ENCODE measurements at regions of chr2 and their contacts with region 1.

Region 1: DNA sequence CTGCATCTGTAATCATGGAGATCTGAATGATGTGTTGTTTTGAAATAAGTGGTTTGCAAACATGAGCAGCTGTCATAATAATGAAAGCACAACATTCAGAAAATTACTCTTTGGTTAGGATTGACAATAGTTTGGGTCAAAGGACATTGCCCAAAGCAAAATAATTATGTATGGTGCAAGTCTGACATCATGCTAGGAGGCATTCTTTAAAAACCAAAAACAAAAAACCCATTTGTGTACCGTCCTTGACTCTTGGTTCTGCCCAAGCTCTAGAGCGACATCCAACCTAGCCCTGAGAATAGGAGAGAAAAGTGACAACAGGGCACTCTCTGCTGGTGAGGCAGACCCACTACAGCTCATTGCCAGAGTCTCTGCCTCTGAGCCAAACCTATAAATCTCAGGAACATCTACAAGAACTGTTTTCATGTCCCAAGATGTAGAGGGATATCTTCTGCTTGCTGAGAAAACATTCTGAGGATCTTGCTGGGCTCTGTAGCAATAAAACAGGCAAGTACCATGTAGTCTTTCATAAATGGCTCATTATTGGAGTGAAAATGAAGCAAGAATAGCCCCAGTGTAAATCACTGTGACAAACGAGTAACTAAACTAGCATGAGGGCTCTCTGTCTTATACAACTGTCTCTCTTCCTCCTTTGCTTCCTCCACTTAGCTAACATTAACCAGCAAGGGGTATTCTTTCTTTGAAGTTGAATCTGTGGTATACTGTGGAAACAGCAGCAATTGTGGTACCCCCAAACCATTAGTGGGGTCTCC is 266.8 kb upstream of the CXCR4 start:
- DNase-seq: peak; percentile 68
- ATAC-seq: peak; percentile 40
- H3K4me3 Mint-ChIP-seq: no peak overlapping the region
- H3K27ac Mint-ChIP-seq: peak overlapping the region; percentile 67
- H3K4me1 Mint-ChIP-seq: peaks cover 42% of the 10 kb centered on the region
- H3K27me3 Mint-ChIP-seq: no peaks in the 10 kb centered on the region

Region 2: DNA sequence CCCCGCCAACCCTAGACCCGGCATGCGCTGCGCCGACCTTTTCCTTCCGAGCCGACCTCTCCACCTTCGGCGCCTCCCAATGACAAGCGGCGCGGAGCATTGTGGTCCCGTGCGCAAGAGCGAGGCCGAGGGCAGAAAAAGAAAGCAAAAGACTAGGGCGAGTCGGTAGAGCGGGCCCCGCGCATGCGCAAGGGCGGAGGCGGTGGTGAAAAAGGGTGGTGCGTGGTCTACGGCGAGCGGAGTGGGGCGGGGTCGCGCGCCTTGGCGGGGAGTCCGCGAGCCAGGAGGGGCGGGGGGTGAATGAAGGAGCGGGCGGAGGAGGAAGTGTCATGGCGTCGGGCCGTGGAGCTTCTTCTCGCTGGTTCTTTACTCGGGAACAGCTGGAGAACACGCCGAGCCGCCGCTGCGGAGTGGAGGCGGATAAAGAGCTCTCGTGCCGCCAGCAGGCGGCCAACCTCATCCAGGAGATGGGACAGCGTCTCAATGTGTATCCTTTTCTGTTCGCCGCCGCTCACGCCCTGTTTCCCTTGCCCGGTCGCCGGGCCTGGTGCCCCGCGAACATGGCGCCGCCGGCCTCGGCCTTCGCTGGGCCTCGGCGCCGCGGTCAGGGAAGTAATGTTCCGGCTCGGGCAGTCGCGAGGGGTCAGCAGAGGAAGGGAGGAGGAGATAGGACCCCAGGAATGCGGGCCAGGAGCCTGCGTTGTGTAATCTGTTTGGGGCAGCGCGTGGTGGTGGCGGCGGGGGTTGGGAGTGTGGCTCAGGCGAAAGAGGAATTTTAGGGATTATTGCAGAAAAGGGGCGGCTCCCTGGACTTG is 1466.0 kb before region 1 on chr2 and contains the start of gene CCNT2:
- CTCF ChIA-PET with region 1: no interaction called
- POLR2A ChIA-PET with region 1: no interaction called
- intact Hi-C with region 1: loop called in 1 of 2 experiments (anchors 5 kb)
- DNase-seq: peak; percentile 100
- ATAC-seq: peak; percentile 89
- H3K4me3 Mint-ChIP-seq: peak within 1 kb of the TSS; percentile 92
- H3K27ac Mint-ChIP-seq: peak within 1 kb of the TSS; percentile 98
- H3K4me1 Mint-ChIP-seq: peaks cover 27% of the 10 kb centered on the region
- H3K27me3 Mint-ChIP-seq: no peaks in the 10 kb centered on the region
- total RNA-seq, gene CCNT2: 29.3 to 36.6 TPM

Region 3: DNA sequence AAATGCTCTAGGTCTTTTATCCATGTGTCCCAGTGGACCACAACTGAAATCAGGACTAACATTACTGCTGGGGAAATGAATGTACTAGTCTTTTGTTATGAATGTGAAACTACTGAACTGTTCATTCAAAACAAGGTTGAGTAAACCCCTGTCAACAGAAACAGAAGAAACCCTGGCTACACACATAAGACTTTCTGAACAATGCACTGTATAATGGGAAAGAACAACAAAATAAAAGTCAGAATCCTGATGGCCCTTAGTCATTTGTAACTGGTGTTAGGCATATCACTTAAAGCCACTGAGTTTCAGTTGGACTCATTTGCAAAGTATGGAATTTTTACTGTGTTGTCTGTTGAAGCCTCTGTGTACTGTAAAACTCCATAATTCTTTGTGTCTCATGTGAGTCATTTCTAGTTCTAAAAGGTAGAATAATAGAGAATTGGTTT is 720.1 kb before region 1 on chr2:
- CTCF ChIA-PET with region 1: no interaction called
- POLR2A ChIA-PET with region 1: no interaction called
- intact Hi-C with region 1: loop called in 1 of 2 experiments (anchors 2 kb)
- DNase-seq: no peak
- ATAC-seq: peak; percentile 79
- H3K4me3 Mint-ChIP-seq: no peak overlapping the region
- H3K27ac Mint-ChIP-seq: peak overlapping the region; percentile 1
- H3K4me1 Mint-ChIP-seq: peaks cover 30% of the 10 kb centered on the region
- H3K27me3 Mint-ChIP-seq: no peaks in the 10 kb centered on the region

Region 4: DNA sequence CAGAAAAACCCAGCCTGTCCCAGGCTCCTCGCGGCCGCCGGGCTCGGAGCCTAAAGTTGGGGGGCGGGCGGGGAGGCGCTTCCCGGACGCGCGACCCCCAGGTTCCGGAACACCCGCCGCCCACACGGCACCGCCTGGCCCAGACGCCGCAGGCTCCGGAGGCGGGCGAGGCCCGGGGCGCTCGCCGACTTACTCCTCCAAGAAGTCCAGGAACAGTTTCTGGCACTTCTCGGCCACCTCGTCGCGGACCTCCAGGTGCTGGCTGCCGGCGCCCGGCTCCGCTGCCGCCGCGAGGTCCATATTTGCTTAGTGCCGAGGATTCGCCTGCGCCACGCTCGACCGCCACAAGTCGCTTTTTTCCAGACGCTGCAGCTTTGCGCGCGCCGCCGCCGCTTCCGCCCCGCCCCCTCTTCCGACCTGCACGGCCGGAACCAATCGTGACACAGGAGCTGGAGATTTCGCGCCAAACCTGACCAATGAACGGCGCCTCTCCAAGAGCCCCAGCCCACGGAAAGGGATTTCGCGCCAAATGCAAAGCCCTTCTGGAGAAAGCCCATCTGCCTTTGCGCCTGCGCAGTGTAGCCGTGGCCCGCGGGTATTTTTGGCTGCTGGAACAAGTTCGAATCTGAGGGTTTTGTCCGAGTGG is 508.5 kb before region 1 on chr2 and contains the start of gene MCM6:
- CTCF ChIA-PET with region 1: interaction called, 6 read pairs
- POLR2A ChIA-PET with region 1: interaction called, 11 read pairs
- intact Hi-C with region 1: loop called (anchors 1 kb)
- DNase-seq: peak; percentile 100
- ATAC-seq: peak; percentile 88
- H3K4me3 Mint-ChIP-seq: peak within 1 kb of the TSS; percentile 86
- H3K27ac Mint-ChIP-seq: peak within 1 kb of the TSS; percentile 96
- H3K4me1 Mint-ChIP-seq: peaks cover 44% of the 10 kb centered on the region
- H3K27me3 Mint-ChIP-seq: no peaks in the 10 kb centered on the region
- total RNA-seq, gene MCM6: 228 to 276 TPM

Region 5: GRCh38 chr2:136052369-136053362 is 332.1 kb before region 1 on chr2:
- CTCF ChIA-PET with region 1: interaction called, 13 read pairs
- POLR2A ChIA-PET with region 1: interaction called, 17 read pairs
- intact Hi-C with region 1: loop called (anchors 1 to 2 kb)
- DNase-seq: peak; percentile 20
- ATAC-seq: peak; percentile 21
- H3K4me3 Mint-ChIP-seq: no peak overlapping the region
- H3K27ac Mint-ChIP-seq: peak overlapping the region; percentile 91
- H3K4me1 Mint-ChIP-seq: peaks cover 79% of the 10 kb centered on the region
- H3K27me3 Mint-ChIP-seq: no peaks in the 10 kb centered on the region

Region 6: GRCh38 chr2:136207030-136207623 is 177.6 kb before region 1 on chr2:
- CTCF ChIA-PET with region 1: interaction called, 3 read pairs
- POLR2A ChIA-PET with region 1: interaction called, 7 read pairs
- intact Hi-C with region 1: loop called (anchors 2 kb)
- DNase-seq: peak; percentile 50
- ATAC-seq: peak; percentile 75
- H3K4me3 Mint-ChIP-seq: peak overlapping the region; percentile 26
- H3K27ac Mint-ChIP-seq: peak overlapping the region; percentile 88
- H3K4me1 Mint-ChIP-seq: peaks cover 40% of the 10 kb centered on the region
- H3K27me3 Mint-ChIP-seq: peaks cover 2% of the 10 kb centered on the region

Region 7: GRCh38 chr2:136281281-136282114 is 103.2 kb before region 1 on chr2:
- CTCF ChIA-PET with region 1: no interaction called
- POLR2A ChIA-PET with region 1: no interaction called
- intact Hi-C with region 1: no loop called
- DNase-seq: peak; percentile 45
- ATAC-seq: peak; percentile 72
- H3K4me3 Mint-ChIP-seq: no peak overlapping the region
- H3K27ac Mint-ChIP-seq: peak overlapping the region; percentile 67
- H3K4me1 Mint-ChIP-seq: peaks cover 39% of the 10 kb centered on the region
- H3K27me3 Mint-ChIP-seq: no peaks in the 10 kb centered on the region

Region 8: DNA sequence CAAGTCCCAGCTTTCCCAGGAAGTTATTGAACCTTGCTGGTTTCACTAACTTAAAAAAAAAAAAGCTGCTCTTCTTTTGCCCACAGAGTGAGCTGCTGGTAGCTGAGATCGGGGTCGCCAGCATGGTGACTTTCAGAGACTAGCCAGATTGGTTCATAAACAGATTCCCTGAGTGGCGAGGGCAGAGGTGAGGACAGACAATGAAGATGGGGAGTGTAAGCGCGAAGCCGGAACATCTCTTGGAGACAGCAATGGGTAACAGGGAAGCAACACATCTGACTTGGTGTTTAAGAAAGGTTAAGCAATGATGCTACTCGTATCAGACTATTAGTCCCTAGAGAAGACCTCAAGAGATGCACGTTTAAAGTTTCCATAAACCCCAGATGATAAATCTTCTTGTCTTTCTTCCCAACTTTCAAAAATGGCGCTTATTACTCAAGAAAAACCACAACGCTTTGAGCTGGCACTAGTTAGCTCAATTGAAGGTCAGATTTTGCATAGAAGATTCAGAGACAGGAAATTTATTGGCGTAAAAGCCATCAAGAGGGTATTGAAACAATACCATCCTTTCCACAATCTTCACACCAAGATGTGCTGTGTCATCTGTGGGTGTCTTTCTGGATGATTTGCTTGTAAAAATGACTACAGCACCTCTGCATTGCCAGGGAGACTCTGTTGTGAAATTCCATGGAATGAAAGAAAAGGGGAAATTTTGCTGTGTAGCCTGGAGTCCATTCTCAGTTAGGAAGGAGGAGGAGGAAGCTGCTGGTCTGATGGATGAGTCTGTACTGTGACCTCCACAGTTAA is 73.7 kb before region 1 on chr2:
- CTCF ChIA-PET with region 1: interaction called, 4 read pairs
- POLR2A ChIA-PET with region 1: interaction called, 9 read pairs
- intact Hi-C with region 1: loop called (anchors 1 kb)
- DNase-seq: peak; percentile 50
- ATAC-seq: peak; percentile 78
- H3K4me3 Mint-ChIP-seq: no peak overlapping the region
- H3K27ac Mint-ChIP-seq: peak overlapping the region; percentile 86
- H3K4me1 Mint-ChIP-seq: peaks cover 36% of the 10 kb centered on the region
- H3K27me3 Mint-ChIP-seq: peaks cover 4% of the 10 kb centered on the region

Region 9: DNA sequence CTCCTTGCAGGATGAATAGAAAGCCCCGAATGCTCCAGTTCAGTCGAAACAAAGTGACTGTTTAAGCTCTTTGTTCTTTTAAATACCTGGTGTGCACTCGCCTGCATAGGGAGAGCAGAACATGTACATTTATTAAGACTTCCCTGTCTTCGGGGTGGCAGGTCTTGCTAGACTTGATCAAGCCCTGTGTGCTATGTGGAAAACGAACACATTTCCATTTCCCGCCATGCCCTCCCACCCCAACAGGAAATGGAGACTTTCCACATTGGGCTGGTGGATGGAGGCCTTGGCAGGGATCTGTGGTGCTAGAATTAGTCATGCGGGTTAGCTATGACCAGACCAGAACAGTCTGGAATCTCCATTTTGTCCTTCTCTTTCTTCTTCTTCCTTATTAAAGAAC is 59.6 kb after region 1 on chr2:
- CTCF ChIA-PET with region 1: no interaction called
- POLR2A ChIA-PET with region 1: no interaction called
- intact Hi-C with region 1: no loop called
- DNase-seq: no peak
- ATAC-seq: no peak
- H3K4me3 Mint-ChIP-seq: no peak overlapping the region
- H3K27ac Mint-ChIP-seq: no peak overlapping the region
- H3K4me1 Mint-ChIP-seq: no peaks in the 10 kb centered on the region
- H3K27me3 Mint-ChIP-seq: peaks cover 15% of the 10 kb centered on the region

Measured in activated CD4-positive, alpha-beta T cell treated with anti-CD3 and anti-CD28 coated beads for 36 hours (primary cell).